H1 (cell line): ENCODE measurements at regions of chr22 and their contacts with region 1.

Region 1: GRCh38 chr22:38705235-38706100 is at the start of gene GTPBP1:
- DNase-seq: peak; percentile 91 to 99
- H3K4me3 ChIP-seq: peak within 1 kb of the TSS; percentile 82 to 95 (median 90)
- H3K27ac ChIP-seq: peak within 1 kb of the TSS; percentile 94
- H3K4me1 ChIP-seq: peaks cover 10 to 19% (median 14%) of the 10 kb centered on the region in 4 experiments; a peak in 5 of 7 replicates
- H3K27me3 ChIP-seq: no peaks in the 10 kb centered on the region
- CTCF ChIP-seq: no peak
- EP300 ChIP-seq: no peak; a peak in 1 of 3 replicates
- POLR2A ChIP-seq: peak; percentile 73 to 87
- RAD21 ChIP-seq: 0 out of 4 replicates have a peak, but pooled peaks of 1 of the 2 experiments have one; percentile 4
- total RNA-seq, gene GTPBP1: 91.8 and 92.0 TPM in 2 replicates

Region 2: DNA sequence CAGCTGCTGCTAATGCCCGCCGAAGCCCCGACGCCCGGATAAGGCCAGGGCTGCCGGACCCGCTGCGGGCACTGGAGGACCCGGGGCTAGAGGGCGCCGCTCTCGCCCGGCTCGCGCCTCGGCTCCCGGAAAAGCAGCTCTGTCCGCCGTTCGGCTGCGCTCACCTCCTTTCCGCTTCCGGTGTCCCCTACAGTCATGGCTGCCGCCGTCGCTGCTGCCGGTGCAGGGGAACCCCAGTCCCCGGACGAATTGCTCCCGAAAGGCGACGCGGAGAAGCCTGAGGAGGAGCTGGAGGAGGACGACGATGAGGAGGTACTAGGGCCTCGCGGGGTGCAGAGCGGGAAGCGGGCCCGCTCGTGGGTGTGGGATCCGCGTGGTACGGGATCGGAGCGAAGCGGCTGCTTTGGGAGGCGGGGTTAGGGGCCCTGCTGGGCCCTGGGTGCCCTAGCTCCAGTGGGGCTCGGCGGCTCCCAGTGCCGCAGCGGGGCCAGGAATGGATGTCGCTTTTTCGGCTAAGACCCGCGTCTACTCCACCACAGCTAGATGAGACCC is 23.6 kb before region 1 on chr22 and contains the start of gene TOMM22:
- CTCF ChIA-PET with region 1: interaction called, 3 read pairs
- POLR2A ChIA-PET with region 1: interaction called, 123 read pairs
- DNase-seq: peak; percentile 73 to 90
- H3K4me3 ChIP-seq: peak within 1 kb of the TSS; percentile 86 to 96 (median 94)
- H3K27ac ChIP-seq: peak within 1 kb of the TSS; percentile 90
- H3K4me1 ChIP-seq: peaks cover 0 to 3% (median 1%) of the 10 kb centered on the region in 4 experiments; a peak in 3 of 7 replicates
- H3K27me3 ChIP-seq: no peaks in the 10 kb centered on the region
- CTCF ChIP-seq: peak; percentile 66 to 81 (median 79)
- EP300 ChIP-seq: no peak
- POLR2A ChIP-seq: peak; percentile 77 to 94
- RAD21 ChIP-seq: peak; percentile 21 to 43; a peak in 2 of 4 replicates
- total RNA-seq, gene TOMM22: 125 and 138 TPM in 2 replicates

Region 3: DNA sequence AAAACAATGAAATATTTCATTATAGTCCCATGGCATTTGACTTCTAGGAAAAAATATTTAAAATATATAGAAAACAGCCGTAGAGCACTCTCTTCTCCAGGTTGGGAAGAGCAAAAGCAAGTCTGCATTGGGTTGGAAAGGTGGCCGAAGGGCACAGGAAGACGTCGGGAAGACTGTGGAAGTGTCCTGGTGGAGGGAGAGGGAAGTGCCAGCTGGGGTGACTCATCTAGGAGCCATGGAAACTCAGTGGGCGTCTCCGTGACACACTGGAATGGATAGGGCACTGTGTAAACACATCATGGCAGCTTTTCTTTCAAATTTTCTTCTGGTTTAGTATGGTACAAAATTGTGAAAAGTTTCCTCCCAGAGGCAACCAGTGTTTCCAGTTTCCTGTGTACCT is 12.9 kb after region 1 on chr22:
- CTCF ChIA-PET with region 1: interaction called, 5 read pairs
- POLR2A ChIA-PET with region 1: interaction called, 39 read pairs
- DNase-seq: no peak
- H3K4me3 ChIP-seq: no peak overlapping the region
- H3K27ac ChIP-seq: no peak overlapping the region
- H3K4me1 ChIP-seq: peaks cover 0 to 3% (median under 1%) of the 10 kb centered on the region in 4 experiments; a peak in 4 of 7 replicates
- H3K27me3 ChIP-seq: no peaks in the 10 kb centered on the region
- CTCF ChIP-seq: peak; percentile 24 to 68 (median 53); a peak in 3 of 4 replicates
- EP300 ChIP-seq: no peak
- POLR2A ChIP-seq: no peak
- RAD21 ChIP-seq: peak in 1 of 2 experiments; percentile 23; a peak in 1 of 4 replicates

Region 4: GRCh38 chr22:38724926-38725571 is 19.6 kb after region 1 on chr22:
- CTCF ChIA-PET with region 1: interaction called, 19 read pairs
- POLR2A ChIA-PET with region 1: interaction called, 9 read pairs
- DNase-seq: no peak
- H3K4me3 ChIP-seq: no peak overlapping the region
- H3K27ac ChIP-seq: no peak overlapping the region
- H3K4me1 ChIP-seq: no peaks in the 10 kb centered on the region
- H3K27me3 ChIP-seq: no peaks in the 10 kb centered on the region
- CTCF ChIP-seq: peak; percentile 45 to 72 (median 54)
- EP300 ChIP-seq: no peak
- POLR2A ChIP-seq: no peak
- RAD21 ChIP-seq: peak in 1 of 2 experiments; percentile 37; a peak in 2 of 4 replicates